Activated naive CD4-positive, alpha-beta T cell treated with anti-CD3 and anti-CD28 coated beads for 36 hours (primary cell): ENCODE measurements at regions of chr18 and their contacts with region 1.

Region 1: GRCh38 chr18:58493516-58494253 is 135.2 kb downstream of the ALPK2 start:
- DNase-seq: peak; percentile 90
- H3K4me3 Mint-ChIP-seq: peak overlapping the region; percentile 17
- H3K27ac Mint-ChIP-seq: no peak overlapping the region
- H3K4me1 Mint-ChIP-seq: peaks cover 11% of the 10 kb centered on the region
- H3K27me3 Mint-ChIP-seq: peaks cover 22% of the 10 kb centered on the region

Region 2: GRCh38 chr18:58135701-58136331 is 357.9 kb before region 1 on chr18:
- CTCF ChIA-PET with region 1: no interaction called
- intact Hi-C with region 1: loop called (anchors 5 kb)
- DNase-seq: peak; percentile 74
- H3K4me3 Mint-ChIP-seq: no peak overlapping the region
- H3K27ac Mint-ChIP-seq: no peak overlapping the region
- H3K4me1 Mint-ChIP-seq: peaks cover 7% of the 10 kb centered on the region
- H3K27me3 Mint-ChIP-seq: peaks cover 9% of the 10 kb centered on the region

Region 3: DNA sequence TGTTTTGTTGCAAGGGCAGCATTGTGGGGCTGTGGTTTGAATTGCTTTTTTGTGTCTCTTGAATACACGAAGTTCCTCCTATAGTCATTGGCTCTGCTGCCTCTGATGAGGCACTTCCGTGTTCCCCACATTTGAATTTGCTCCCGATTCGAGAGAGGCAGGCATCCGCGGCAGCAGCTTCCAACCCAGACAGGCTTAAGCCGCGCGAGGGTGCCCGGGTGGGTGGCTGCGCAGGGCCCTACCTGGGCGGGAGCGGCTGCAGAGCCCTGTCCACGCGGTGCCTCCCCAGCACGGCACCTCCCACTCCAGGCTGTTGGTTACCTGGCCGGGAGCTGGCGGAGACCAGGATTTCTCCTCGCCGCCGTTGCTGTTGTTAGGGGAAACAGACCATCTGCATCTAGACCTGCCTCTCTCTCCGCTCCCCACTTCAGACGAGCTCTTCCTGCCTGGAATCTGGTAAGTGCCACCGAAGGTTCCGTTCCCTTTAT is 298.4 kb before region 1 on chr18:
- CTCF ChIA-PET with region 1: no interaction called
- intact Hi-C with region 1: loop called (anchors 2 kb)
- DNase-seq: peak; percentile 36
- H3K4me3 Mint-ChIP-seq: peak overlapping the region; percentile 80
- H3K27ac Mint-ChIP-seq: peak overlapping the region; percentile 12
- H3K4me1 Mint-ChIP-seq: peaks cover 16% of the 10 kb centered on the region
- H3K27me3 Mint-ChIP-seq: no peaks in the 10 kb centered on the region

Region 4: GRCh38 chr18:58338961-58339592 is 154.6 kb before region 1 on chr18:
- CTCF ChIA-PET with region 1: no interaction called
- intact Hi-C with region 1: loop called (anchors 5 kb)
- DNase-seq: no peak
- H3K4me3 Mint-ChIP-seq: no peak overlapping the region
- H3K27ac Mint-ChIP-seq: no peak overlapping the region
- H3K4me1 Mint-ChIP-seq: no peaks in the 10 kb centered on the region
- H3K27me3 Mint-ChIP-seq: no peaks in the 10 kb centered on the region

Region 5: DNA sequence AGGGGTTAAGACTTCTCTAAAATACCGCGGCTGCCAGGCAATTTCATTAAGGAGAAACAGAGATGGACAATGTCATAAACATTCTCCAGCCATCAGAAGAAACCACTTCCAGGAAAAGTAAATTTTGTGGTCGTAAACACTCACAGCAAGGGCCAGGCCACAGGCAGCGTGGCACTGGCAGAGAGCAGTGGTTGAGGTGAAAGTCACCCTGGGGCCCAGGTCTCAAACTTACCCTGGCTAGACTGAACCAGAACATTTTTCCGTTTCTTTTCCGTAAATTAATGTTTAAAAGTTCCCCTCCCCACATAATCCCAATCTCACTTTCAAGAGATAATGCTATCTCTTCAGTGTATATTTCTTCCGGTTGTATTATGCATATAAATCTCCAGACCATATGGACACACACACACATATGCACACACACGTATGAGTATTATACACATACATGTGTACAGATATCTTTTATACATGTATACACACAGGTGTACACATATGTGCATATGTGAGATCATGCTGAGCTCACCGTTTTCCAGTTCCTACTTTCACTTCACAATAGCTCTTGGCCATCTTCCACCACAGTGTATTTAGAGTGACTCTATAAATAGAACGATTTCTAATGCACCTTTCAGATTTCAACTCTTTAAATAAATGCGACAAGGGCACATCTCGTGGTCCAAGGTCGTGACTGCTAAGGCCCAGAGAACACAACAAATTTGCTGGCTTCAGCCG is 267.7 kb after region 1 on chr18:
- CTCF ChIA-PET with region 1: interaction called, 35 read pairs
- intact Hi-C with region 1: loop called (anchors 1 kb)
- DNase-seq: no peak
- H3K4me3 Mint-ChIP-seq: no peak overlapping the region
- H3K27ac Mint-ChIP-seq: no peak overlapping the region
- H3K4me1 Mint-ChIP-seq: peaks cover 22% of the 10 kb centered on the region
- H3K27me3 Mint-ChIP-seq: peaks cover 18% of the 10 kb centered on the region